HEK293 (cell line): ENCODE measurements at regions of chr2 and their contacts with region 1.

Region 1: DNA sequence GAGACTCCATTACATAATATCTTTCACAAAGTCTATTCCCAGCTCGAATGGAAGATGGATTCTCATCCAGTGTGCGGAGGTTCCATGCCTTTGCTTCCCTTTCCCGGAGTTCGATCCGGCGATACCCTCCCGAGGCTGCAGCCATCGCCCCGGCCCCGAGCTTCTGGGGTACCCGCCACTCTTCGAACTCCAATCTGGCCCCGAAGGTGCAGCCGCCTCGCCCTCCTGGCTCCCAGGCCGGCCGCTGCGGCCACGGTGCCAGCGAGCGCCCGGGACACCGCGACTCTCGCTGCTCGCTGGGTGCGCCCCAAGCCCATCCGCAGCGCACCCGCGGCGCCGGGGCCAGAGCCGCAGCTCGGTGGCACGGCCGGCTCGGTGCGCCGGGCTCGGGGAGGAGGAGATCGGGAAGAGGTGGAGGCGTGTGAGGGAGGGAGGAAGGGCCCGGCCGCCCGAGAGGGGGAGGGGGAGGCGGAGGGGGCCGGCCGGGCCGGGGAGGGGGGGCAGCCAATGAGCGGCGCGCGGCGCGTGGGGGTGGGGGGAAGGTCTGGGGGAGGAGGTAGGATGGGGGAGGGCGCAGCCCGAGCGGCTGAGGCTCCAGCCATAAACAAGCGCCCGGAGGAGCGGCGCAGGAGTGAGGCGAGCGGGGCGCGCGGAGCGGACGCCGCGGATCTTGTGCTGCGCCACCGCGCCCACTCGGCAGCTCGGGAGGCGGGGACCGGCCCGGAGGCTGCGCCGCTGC is at the start of gene CRIM1:
- H3K4me3 ChIP-seq: peak within 1 kb of the TSS; percentile 95
- H3K27ac ChIP-seq: peak within 1 kb of the TSS; percentile 93
- H3K4me1 ChIP-seq: peaks cover 22% of the 10 kb centered on the region
- CTCF ChIP-seq: no peak

Region 2: DNA sequence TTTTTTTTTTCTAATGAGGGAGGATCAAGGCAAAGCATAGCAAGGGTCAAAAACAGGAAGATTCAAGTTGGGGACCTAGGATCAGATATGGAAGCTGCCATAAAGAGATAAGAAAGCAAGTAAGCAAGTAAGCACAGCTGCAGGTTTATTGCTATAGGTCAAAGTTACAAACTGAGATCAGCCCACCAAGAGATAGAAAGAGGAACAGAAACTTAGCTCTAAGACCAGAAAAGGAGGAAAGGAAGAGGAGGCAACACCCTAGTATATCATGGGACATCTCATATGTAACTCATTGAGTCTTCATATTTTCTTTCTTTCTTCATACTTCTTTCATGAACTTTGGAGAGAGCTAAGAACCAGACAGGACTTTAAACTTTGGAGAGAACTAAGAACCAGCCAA is 295.6 kb before region 1 on chr2:
- CTCF ChIA-PET with region 1: no interaction called
- POLR2A ChIA-PET with region 1: no interaction called
- H3K4me3 ChIP-seq: no peak overlapping the region
- H3K27ac ChIP-seq: no peak overlapping the region
- H3K4me1 ChIP-seq: no peaks in the 10 kb centered on the region
- CTCF ChIP-seq: no peak

Region 3: DNA sequence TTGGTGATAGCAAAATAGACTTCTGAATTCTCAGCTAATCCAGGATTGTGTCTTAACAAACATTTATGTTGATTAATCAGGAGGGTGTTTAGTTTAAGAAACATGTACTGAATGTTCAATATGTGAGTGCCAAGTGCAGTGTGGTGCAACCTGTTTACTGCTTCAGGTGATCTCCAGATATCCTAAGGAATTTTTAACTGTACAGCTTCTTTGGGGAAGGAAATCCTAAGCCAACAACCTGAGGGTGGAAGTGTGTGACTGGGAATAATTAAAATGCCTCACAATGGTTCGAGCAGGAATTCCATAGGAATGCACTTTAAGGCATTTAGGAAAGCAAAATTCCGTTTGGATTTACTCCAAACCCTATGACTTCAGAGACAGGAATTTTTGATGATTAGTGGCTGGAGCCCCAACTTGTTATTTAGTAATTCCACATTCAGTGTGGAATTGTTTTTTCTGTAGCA is 16.6 kb after region 1 on chr2:
- CTCF ChIA-PET with region 1: interaction called, 14 read pairs
- POLR2A ChIA-PET with region 1: interaction called, 22 read pairs
- H3K4me3 ChIP-seq: no peak overlapping the region
- H3K27ac ChIP-seq: no peak overlapping the region
- H3K4me1 ChIP-seq: peaks cover 49% of the 10 kb centered on the region
- CTCF ChIP-seq: no peak

Region 4: GRCh38 chr2:36461039-36461681 is 105.8 kb after region 1 on chr2:
- CTCF ChIA-PET with region 1: interaction called, 12 read pairs
- POLR2A ChIA-PET with region 1: interaction called, 3 read pairs
- H3K4me3 ChIP-seq: no peak overlapping the region
- H3K27ac ChIP-seq: no peak overlapping the region
- H3K4me1 ChIP-seq: peaks cover 11% of the 10 kb centered on the region; the same call in 1 of the 2 replicates
- CTCF ChIP-seq: no peak

Region 5: DNA sequence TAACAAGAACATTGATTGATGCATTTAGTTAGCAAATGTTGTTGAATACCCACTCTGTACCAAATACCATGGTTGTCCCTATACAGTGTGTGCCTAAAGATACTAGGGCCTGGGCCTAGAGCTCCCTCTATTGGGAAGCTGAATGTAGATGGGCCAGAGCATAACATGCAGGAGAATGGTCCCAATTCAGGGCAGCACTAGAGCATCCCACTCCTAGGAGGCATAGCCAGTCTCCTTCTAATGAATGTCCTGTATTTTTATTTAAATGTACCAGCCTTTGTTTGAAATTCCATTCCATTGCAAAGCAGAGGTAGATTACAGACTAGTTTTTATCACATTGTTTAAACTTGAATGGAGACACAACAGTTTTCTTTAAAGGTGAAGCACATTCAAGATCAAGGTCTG is 152.1 kb after region 1 on chr2:
- CTCF ChIA-PET with region 1: interaction called, 12 read pairs
- POLR2A ChIA-PET with region 1: interaction called, 4 read pairs
- H3K4me3 ChIP-seq: no peak overlapping the region
- H3K27ac ChIP-seq: no peak overlapping the region
- H3K4me1 ChIP-seq: no peaks in the 10 kb centered on the region
- CTCF ChIP-seq: peak; percentile 45; the same call in 1 of the 2 replicates

Region 6: GRCh38 chr2:36663851-36664695 is 308.8 kb after region 1 on chr2:
- CTCF ChIA-PET with region 1: interaction called, 18 read pairs
- POLR2A ChIA-PET with region 1: no interaction called
- H3K4me3 ChIP-seq: no peak overlapping the region
- H3K27ac ChIP-seq: no peak overlapping the region
- H3K4me1 ChIP-seq: no peaks in the 10 kb centered on the region
- CTCF ChIP-seq: peak; percentile 59; the same call in 1 of the 2 replicates

Region 7: DNA sequence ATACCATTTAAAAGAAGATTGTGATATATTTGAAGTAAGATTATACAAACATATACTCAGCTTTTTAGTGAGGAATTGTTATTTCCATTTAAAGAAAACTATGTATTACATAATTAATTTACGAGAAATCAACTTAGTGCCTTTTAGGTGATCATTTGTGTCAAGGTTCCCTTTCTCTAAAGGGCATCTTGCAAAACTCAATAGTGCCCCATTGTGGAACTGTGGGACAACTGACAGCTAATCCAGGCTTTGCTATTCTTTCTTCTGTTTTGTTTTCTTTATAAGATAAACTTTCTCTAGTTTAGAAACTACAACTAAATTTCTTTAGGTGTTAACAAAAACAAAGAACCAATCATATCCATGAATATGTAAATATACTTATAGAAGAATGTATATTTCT is 316.9 kb after region 1 on chr2:
- CTCF ChIA-PET with region 1: interaction called, 12 read pairs
- POLR2A ChIA-PET with region 1: no interaction called
- H3K4me3 ChIP-seq: no peak overlapping the region
- H3K27ac ChIP-seq: no peak overlapping the region
- H3K4me1 ChIP-seq: no peaks in the 10 kb centered on the region
- CTCF ChIP-seq: 0 out of 2 replicates have a peak, but pooled peaks have one; percentile 19